ENCODE measurements at regions of chr3 and their contacts with region 1.

Region 1: GRCh38 chr3:158659454-158660237 is 12.8 kb downstream of the LXN start:
- DNase-seq: peak in 3 of 4 donors; percentile 40 to 77 (median 40)
- ATAC-seq: peak; percentile 89
- H3K4me3 ChIP-seq: no peak overlapping the region
- H3K27ac ChIP-seq: peak overlapping the region; percentile 22 to 48
- H3K4me1 ChIP-seq: peaks cover 0 to 8% of the 10 kb centered on the region in 2 donors
- H3K27me3 ChIP-seq: no peaks in the 10 kb centered on the region
- CTCF ChIP-seq: peak; percentile 59 to 63

Region 2: DNA sequence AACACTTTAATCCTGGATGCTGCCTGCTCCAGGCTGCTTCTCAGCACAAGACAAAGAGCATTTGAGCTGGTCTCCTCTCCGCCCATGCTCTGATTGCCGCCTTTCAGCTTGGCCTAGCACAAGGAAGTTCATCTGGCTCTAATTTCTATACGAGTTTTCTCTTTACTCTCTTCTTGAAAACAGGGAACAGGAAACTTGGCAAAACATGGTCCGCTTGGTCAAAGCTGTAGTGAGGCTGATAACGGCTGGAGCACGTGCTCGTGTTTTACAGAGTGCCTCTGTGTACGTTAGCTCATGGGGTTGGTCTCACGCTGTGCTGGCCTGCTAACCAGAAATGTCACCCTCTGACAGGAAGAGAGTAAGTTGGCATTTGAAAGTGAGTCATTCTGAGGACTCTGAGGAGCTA is 53.5 kb after region 1 on chr3:
- intact Hi-C with region 1: loop called in 1 of 2 experiments (anchors 10 kb)
- DNase-seq: peak in 1 of 4 donors; percentile 59
- ATAC-seq: peak; percentile 49
- H3K4me3 ChIP-seq: no peak overlapping the region
- H3K27ac ChIP-seq: peak overlapping the region; percentile 64 to 65
- H3K4me1 ChIP-seq: peaks cover 0 to 42% of the 10 kb centered on the region in 2 donors
- H3K27me3 ChIP-seq: no peaks in the 10 kb centered on the region
- CTCF ChIP-seq: no peak